HCT116 (cell line): ENCODE measurements at regions of chr17 and their contacts with region 1.

Region 1: GRCh38 chr17:20009302-20010098 is at the start of gene SPECC1:
- DNase-seq: peak; percentile 49
- ATAC-seq: peak; percentile 93
- H3K4me3 ChIP-seq: peak within 1 kb of the TSS; percentile 59 to 71
- H3K27ac ChIP-seq: peak within 1 kb of the TSS; percentile 53
- H3K4me1 ChIP-seq: peaks cover 5 to 25% of the 10 kb centered on the region in 2 experiments; a peak in 2 of 4 replicates
- H3K27me3 ChIP-seq: 0 out of 2 replicates have a peak, but pooled peaks cover 5% of the 10 kb centered on the region
- CTCF ChIP-seq: peak; percentile 59 to 96 (median 79); a peak in 4 of 6 replicates
- POLR2A ChIP-seq: no peak
- RAD21 ChIP-seq: no peak
- total RNA-seq, gene SPECC1: 43.5 TPM

Region 2: DNA sequence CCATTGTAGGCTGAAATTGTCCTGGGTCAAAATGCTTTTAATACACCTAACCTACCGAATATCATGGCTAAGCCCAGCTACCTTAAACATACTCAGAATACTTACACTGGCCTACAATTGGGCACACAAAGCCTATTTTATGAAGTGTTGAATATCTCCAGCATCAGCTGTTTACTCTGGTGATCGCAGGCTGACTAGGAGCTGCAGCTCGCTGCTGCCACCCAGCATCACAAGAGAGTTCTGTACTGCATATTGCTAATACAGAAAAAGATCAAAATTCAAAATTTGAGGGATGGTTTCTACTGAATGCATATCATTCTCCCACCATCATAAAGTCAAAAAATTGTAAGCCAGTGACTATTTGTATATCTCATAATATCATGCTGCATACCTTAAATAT is 197.1 kb before region 1 on chr17:
- CTCF ChIA-PET with region 1: no interaction called
- POLR2A ChIA-PET with region 1: no interaction called
- RAD21 ChIA-PET with region 1: no interaction called
- intact Hi-C with region 1: no loop called
- DNase-seq: no peak
- ATAC-seq: peak; percentile 64
- H3K4me3 ChIP-seq: no peak overlapping the region
- H3K27ac ChIP-seq: no peak overlapping the region
- H3K4me1 ChIP-seq: no peaks in the 10 kb centered on the region
- H3K27me3 ChIP-seq: no peaks in the 10 kb centered on the region
- CTCF ChIP-seq: peak; percentile 19 to 51 (median 44); a peak in 4 of 6 replicates
- POLR2A ChIP-seq: no peak
- RAD21 ChIP-seq: peak; percentile 34; the same call in 1 of the 2 replicates

Region 3: DNA sequence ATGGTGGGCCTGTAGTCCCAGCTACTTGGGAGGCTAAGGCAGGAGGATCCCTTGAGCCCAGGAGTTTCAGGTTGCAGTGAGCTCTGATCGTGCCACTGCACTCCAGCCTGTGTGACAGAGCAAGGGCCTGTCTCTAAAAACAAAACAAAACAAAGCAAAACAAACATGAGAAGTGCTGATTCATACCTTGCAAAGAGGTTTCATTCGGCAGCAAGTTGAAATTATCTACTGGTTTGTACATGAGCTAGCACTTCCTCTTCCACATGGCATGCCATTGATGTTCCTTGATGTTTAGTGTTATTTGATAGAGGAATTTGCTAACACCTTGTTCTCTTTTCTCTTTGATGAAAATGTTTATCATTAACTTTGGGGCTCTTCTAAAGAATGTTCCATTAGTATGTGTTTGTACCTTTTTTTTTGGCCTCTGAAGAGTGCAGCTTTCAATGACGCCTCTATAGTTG is 50.3 kb after region 1 on chr17:
- CTCF ChIA-PET with region 1: interaction called, 10 read pairs
- POLR2A ChIA-PET with region 1: no interaction called
- RAD21 ChIA-PET with region 1: no interaction called
- intact Hi-C with region 1: no loop called
- DNase-seq: no peak
- ATAC-seq: peak; percentile 46; the same call in 1 of the 2 replicates
- H3K4me3 ChIP-seq: no peak overlapping the region
- H3K27ac ChIP-seq: no peak overlapping the region
- H3K4me1 ChIP-seq: peaks cover 26 to 29% of the 10 kb centered on the region in 2 experiments
- H3K27me3 ChIP-seq: no peaks in the 10 kb centered on the region
- CTCF ChIP-seq: no peak
- POLR2A ChIP-seq: no peak
- RAD21 ChIP-seq: no peak

Region 4: GRCh38 chr17:20095336-20096080 is 86.0 kb after region 1 on chr17:
- CTCF ChIA-PET with region 1: interaction called, 12 read pairs
- POLR2A ChIA-PET with region 1: no interaction called
- RAD21 ChIA-PET with region 1: interaction called in 1 of 2 experiments, 3 read pairs
- intact Hi-C with region 1: loop called (anchors 5 kb)
- DNase-seq: peak; percentile 22
- ATAC-seq: peak; percentile 94
- H3K4me3 ChIP-seq: peak overlapping the region in 1 of 2 experiments; percentile 11; a peak in 1 of 4 replicates
- H3K27ac ChIP-seq: no peak overlapping the region
- H3K4me1 ChIP-seq: peaks cover 7 to 10% of the 10 kb centered on the region in 2 experiments; a peak in 2 of 4 replicates
- H3K27me3 ChIP-seq: no peaks in the 10 kb centered on the region
- CTCF ChIP-seq: peak in 2 of 3 experiments; percentile 35 to 53; a peak in 5 of 6 replicates
- POLR2A ChIP-seq: no peak
- RAD21 ChIP-seq: peak; percentile 33